Stomach (tissue), 19 donors: ENCODE measurements at regions of chr1 and their contacts with region 1.

Region 1: DNA sequence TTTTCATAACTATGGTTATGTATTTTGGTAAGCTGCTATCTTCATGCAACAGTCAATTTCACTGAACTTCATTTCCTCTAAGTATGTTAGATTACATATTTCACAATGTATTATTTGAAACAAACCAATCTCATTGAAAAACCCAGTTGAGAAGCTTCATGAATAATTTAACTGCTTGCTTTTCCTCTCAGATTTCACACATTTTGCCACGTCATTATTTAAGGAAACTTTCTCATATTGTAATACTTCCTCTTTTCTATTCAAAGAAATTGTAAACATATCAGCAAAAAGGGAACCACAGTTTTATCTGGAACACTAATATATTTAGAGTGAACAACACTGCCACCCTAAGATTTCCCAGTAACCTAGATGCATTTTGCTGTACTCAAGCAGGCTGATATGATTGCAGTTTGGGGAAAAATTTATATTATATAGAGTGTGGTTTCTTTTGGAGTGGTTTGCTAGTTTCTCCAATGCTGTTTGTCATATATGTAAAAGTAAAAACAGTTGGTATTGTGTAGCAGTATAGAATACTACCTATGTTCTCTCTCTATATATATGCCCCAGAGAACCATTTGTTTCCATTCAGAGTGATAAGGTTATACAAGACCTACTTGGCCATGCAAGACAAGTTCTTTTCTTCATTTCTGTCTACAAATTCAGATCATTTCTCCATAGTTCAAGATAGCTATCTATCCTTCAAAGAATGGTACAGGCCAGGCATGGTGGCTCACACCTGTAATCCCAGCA is 28.4 kb upstream of the AHCTF1 start:
- DNase-seq: peak in 1 of 2 donors; percentile 12
- H3K4me3 ChIP-seq: no peak overlapping the region
- H3K27ac ChIP-seq: peak overlapping the region in 2 of 5 donors; percentile 49 to 65
- H3K4me1 ChIP-seq: peaks cover 0 to 8% (median 0%) of the 10 kb centered on the region in 4 donors
- H3K27me3 ChIP-seq: no peaks in the 10 kb centered on the region
- CTCF ChIP-seq: peak in 1 of 7 experiments; percentile 5
- EP300 ChIP-seq: no peak
- POLR2A ChIP-seq: no peak

Region 2: DNA sequence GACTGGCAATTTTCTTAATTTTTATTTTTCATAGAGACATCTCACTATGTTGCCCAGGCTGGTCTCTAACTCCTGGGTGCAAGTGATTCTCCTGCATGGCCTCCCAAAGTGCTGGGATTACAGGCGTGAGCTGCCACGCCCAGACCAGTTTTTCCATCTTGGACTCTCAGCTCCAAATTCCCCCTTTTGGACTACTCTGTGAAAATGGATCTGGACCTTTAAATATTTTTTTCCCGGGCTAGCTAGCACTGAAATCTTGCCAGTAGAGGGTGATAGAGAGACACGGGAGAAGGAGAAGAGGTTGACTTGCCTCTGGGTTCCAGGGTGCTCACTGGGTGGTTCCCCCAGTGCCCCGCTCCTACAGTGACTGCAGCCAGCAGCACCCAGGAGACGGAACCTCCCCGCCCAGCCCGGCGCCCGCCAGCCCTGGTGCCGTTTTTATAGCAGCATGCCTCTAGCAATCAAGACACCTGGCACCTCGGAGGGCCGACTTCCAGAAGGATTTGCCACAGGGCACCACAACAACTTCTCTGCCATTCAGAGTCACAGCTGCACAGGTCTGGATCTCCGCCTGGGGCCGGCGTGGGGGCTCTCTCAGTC is 270.6 kb before region 1 on chr1:
- intact Hi-C with region 1: no loop called
- DNase-seq: peak; percentile 71 to 90
- H3K4me3 ChIP-seq: peak overlapping the region; percentile 31 to 39 (median 32)
- H3K27ac ChIP-seq: peak overlapping the region in 4 of 5 donors; percentile 7 to 54 (median 32)
- H3K4me1 ChIP-seq: peaks cover 0 to 14% (median 13%) of the 10 kb centered on the region in 4 donors
- H3K27me3 ChIP-seq: no peaks in the 10 kb centered on the region
- CTCF ChIP-seq: peak in 5 of 7 experiments; percentile 30 to 86 (median 68)
- EP300 ChIP-seq: no peak
- POLR2A ChIP-seq: no peak

Region 3: GRCh38 chr1:246907472-246907871 is 52.6 kb before region 1 on chr1:
- intact Hi-C with region 1: loop called (anchors 10 kb)
- DNase-seq: peak in 1 of 2 donors; percentile 79
- H3K4me3 ChIP-seq: no peak overlapping the region
- H3K27ac ChIP-seq: no peak overlapping the region
- H3K4me1 ChIP-seq: peaks cover 0 to 9% (median 2%) of the 10 kb centered on the region in 4 donors
- H3K27me3 ChIP-seq: no peaks in the 10 kb centered on the region
- CTCF ChIP-seq: peak in 4 of 7 experiments; percentile 15 to 50 (median 28)
- EP300 ChIP-seq: no peak
- POLR2A ChIP-seq: no peak